Esophagus muscularis mucosa (tissue), 4 donors: ENCODE measurements at regions of chr3 and their contacts with region 1.

Region 1: GRCh38 chr3:10344147-10344943 is 23.4 kb upstream of the SEC13 start:
- DNase-seq: no peak
- H3K4me3 ChIP-seq: no peak overlapping the region
- H3K27ac ChIP-seq: no peak overlapping the region
- H3K4me1 ChIP-seq: peaks cover 0 to 8% (median 0%) of the 10 kb centered on the region in 4 donors
- H3K27me3 ChIP-seq: peaks cover 0 to 11% (median 0%) of the 10 kb centered on the region in 4 donors
- CTCF ChIP-seq: peak; percentile 66 to 93 (median 73)
- EP300 ChIP-seq: no peak
- POLR2A ChIP-seq: no peak

Region 2: DNA sequence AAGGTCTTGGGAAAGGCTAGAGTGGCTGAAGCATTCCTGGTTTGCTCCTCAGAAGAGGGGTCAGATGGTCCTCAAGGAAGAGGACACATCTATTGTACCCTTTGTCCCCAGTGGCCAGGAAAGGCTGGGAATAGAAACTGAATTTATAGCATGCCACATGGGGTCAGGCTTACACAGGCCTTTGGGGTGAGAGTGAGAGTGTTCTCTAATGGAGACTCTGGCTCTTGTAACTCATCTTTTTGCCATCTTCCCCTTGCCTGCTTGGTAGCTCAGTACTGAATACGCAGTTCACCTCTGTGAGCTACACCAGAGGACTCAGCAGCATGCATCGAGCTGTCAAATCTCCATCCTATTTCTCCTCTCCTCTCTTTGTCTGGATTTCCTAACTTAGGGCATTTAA is 73.5 kb after region 1 on chr3:
- intact Hi-C with region 1: no loop called
- DNase-seq: no peak
- H3K4me3 ChIP-seq: no peak overlapping the region
- H3K27ac ChIP-seq: no peak overlapping the region
- H3K4me1 ChIP-seq: no peaks in the 10 kb centered on the region
- H3K27me3 ChIP-seq: peaks cover 0 to 24% (median 0%) of the 10 kb centered on the region in 4 donors
- CTCF ChIP-seq: no peak
- EP300 ChIP-seq: no peak
- POLR2A ChIP-seq: no peak

Region 3: GRCh38 chr3:10738688-10739372 is 394.5 kb after region 1 on chr3:
- intact Hi-C with region 1: loop called (anchors 2 kb)
- DNase-seq: peak; percentile 95
- H3K4me3 ChIP-seq: peak overlapping the region; percentile 21 to 39 (median 33)
- H3K27ac ChIP-seq: no peak overlapping the region
- H3K4me1 ChIP-seq: peaks cover 0 to 8% (median 5%) of the 10 kb centered on the region in 4 donors
- H3K27me3 ChIP-seq: peaks cover 0 to 66% (median 12%) of the 10 kb centered on the region in 4 donors
- CTCF ChIP-seq: peak; percentile 68 to 90 (median 69)
- EP300 ChIP-seq: no peak
- POLR2A ChIP-seq: no peak

Region 4: DNA sequence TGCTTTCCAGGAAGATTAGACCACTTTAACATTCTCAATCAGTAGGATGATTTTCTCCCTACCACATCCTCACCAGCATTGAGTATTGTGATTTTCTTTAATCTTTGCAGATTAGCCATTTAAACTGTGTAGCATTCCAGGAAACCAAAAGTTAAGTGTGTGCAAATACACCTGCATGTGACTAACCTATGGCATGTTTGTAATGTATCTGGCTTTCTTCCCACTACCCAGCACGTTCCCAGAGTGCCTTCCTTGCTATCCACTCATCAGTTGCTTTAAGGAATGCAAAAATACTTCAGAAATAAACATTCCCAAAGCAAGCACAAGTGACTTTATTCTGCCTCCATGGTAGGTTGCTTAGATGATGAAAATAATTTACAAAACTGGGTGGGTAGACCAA is 1002.1 kb after region 1 on chr3:
- intact Hi-C with region 1: no loop called
- DNase-seq: no peak
- H3K4me3 ChIP-seq: no peak overlapping the region
- H3K27ac ChIP-seq: no peak overlapping the region
- H3K4me1 ChIP-seq: no peaks in the 10 kb centered on the region
- H3K27me3 ChIP-seq: no peaks in the 10 kb centered on the region
- CTCF ChIP-seq: no peak
- EP300 ChIP-seq: no peak
- POLR2A ChIP-seq: no peak